ENCODE measurements at regions of chr2 and their contacts with region 1.

Region 1: DNA sequence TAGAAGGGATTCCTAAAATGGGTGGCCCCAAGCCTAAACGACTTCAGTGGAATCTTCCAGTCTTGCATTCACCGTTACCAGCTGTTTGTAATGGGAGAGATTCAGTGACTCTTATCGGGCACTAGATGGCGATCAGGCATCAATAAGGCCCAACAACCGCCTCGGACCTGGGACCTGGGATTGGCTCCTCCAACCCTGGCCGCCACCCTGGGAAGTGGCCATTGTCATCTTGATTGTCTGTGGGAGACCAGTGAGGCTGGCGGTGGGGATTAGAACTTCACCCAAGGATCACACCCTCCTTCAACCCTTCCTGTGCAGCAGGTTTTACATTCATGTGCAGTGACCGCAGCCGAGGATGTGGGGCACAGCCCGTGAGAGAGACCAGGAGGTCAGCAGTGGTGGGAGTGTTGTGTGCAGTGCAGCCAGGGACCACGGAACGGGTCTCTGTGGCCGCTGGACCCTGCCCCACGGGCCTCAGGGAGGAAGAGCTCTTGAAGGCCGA is 85.3 kb downstream of the SPP2 start:
- DNase-seq: peak; percentile 82
- ATAC-seq: peak; percentile 74
- H3K4me3 ChIP-seq: no peak overlapping the region
- H3K27ac ChIP-seq: peak overlapping the region; percentile 48
- H3K4me1 ChIP-seq: peaks cover 46% of the 10 kb centered on the region
- H3K27me3 ChIP-seq: no peaks in the 10 kb centered on the region
- CTCF ChIP-seq: peak; percentile 91

Region 2: DNA sequence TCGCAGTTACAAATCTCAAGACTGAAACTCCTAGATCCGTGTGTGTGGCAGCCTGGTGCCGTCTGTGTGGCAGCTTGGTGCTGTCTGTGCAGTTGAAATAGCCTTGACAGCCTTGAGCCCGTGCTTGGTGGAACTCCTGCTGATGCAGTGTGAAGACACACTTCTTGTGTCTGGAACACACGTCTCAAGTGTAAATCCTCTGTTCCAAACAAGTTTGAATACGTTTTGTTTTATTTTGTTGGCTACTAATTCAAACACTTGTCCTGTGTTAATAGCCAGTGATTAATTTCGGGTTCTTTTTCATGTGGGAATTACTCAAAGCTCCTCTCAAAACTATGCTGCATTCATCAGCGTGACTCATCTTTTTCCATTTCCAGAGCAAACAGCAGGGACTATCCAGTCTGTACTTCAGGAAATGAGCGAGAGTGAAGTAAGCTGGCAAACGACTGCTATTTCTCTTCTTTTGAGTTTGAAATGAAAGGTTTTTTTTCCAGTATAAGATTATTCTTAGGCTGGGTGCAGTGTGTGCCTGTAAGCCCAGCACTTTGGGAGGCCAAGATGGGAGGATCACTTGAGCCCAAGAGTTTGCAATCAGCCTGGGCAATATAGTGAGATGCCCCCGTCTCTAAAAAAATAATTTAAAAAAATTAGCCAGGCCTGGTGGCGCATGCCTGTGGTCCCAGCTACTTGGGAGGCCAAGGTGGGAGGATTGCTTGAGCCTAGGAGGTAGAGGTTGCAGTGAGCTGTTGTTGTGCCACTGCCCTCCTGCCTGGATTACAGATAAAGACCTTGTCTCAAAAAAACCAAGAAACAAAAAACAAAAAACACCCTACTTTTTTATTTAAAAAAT is 67.6 kb after region 1 on chr2:
- CTCF ChIA-PET with region 1: no interaction called
- POLR2A ChIA-PET with region 1: interaction called, 6 read pairs
- intact Hi-C with region 1: loop called (anchors 1 kb)
- DNase-seq: peak; percentile 97
- ATAC-seq: peak; percentile 97
- H3K4me3 ChIP-seq: peak overlapping the region; percentile 39
- H3K27ac ChIP-seq: peak overlapping the region; percentile 89
- H3K4me1 ChIP-seq: peaks cover 32% of the 10 kb centered on the region
- H3K27me3 ChIP-seq: no peaks in the 10 kb centered on the region
- CTCF ChIP-seq: no peak

Region 3: GRCh38 chr2:234257856-234258561 is 122.2 kb after region 1 on chr2:
- CTCF ChIA-PET with region 1: interaction called, 4 read pairs
- POLR2A ChIA-PET with region 1: no interaction called
- intact Hi-C with region 1: loop called (anchors 1 kb)
- DNase-seq: peak; percentile 97
- ATAC-seq: peak; percentile 99
- H3K4me3 ChIP-seq: peak overlapping the region; percentile 22; the same call in 1 of the 2 replicates
- H3K27ac ChIP-seq: peak overlapping the region; percentile 97
- H3K4me1 ChIP-seq: peaks cover 41% of the 10 kb centered on the region
- H3K27me3 ChIP-seq: no peaks in the 10 kb centered on the region
- CTCF ChIP-seq: peak; percentile 80

Region 4: GRCh38 chr2:234368861-234369261 is 233.1 kb after region 1 on chr2:
- CTCF ChIA-PET with region 1: no interaction called
- POLR2A ChIA-PET with region 1: no interaction called
- intact Hi-C with region 1: loop called (anchors 2 kb)
- DNase-seq: peak; percentile 85
- ATAC-seq: peak; percentile 98
- H3K4me3 ChIP-seq: no peak overlapping the region
- H3K27ac ChIP-seq: peak overlapping the region; percentile 82
- H3K4me1 ChIP-seq: peaks cover 52% of the 10 kb centered on the region
- H3K27me3 ChIP-seq: no peaks in the 10 kb centered on the region
- CTCF ChIP-seq: no peak

Region 5: GRCh38 chr2:234500394-234501006 is 364.7 kb after region 1 on chr2:
- CTCF ChIA-PET with region 1: interaction called, 5 read pairs
- POLR2A ChIA-PET with region 1: no interaction called
- intact Hi-C with region 1: loop called (anchors 1 kb)
- DNase-seq: peak; percentile 66
- ATAC-seq: peak; percentile 23; the same call in 1 of the 2 replicates
- H3K4me3 ChIP-seq: no peak overlapping the region
- H3K27ac ChIP-seq: no peak overlapping the region
- H3K4me1 ChIP-seq: peaks cover 16% of the 10 kb centered on the region
- H3K27me3 ChIP-seq: no peaks in the 10 kb centered on the region
- CTCF ChIP-seq: peak; percentile 82